Activated CD4-positive, alpha-beta T cell treated with anti-CD3 and anti-CD28 coated beads, Interleukin-2, amount 10 ng/mL, durations not matched to agents 7 days and 5 days (primary cell): ENCODE measurements at regions of chrX and their contacts with region 1.

Region 1: GRCh38 chrX:43349363-43349762 is 306.7 kb upstream of the MAOA start:
- DNase-seq: peak; percentile 37
- H3K4me3 Mint-ChIP-seq: no peak overlapping the region
- H3K27ac Mint-ChIP-seq: no peak overlapping the region
- H3K4me1 Mint-ChIP-seq: no peaks in the 10 kb centered on the region
- H3K27me3 Mint-ChIP-seq: no peaks in the 10 kb centered on the region

Region 2: DNA sequence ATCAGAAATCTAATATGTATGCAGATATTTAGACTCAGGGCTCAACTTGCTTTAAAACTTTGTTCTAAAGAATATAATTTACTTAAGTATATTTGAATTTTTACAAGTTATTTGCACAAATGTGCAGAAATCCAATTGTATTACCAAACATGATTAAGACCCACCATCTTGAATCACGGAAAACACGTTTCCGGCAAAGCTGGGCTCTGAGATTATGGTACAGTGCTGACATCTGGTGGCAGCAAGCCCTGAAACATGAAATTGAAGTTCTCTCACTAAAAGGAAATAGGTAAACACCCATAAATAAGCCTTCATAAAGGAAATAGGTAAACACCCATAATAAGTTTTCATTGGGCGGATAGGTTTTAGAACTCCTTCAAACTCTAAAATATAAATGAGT is 208.4 kb after region 1 on chrX:
- CTCF ChIA-PET with region 1: interaction called, 11 read pairs
- POLR2A ChIA-PET with region 1: no interaction called
- DNase-seq: peak; percentile 60
- H3K4me3 Mint-ChIP-seq: no peak overlapping the region
- H3K27ac Mint-ChIP-seq: no peak overlapping the region
- H3K4me1 Mint-ChIP-seq: peaks cover 1% of the 10 kb centered on the region
- H3K27me3 Mint-ChIP-seq: no peaks in the 10 kb centered on the region